ENCODE measurements at regions of chr3 and their contacts with region 1.

Region 1: DNA sequence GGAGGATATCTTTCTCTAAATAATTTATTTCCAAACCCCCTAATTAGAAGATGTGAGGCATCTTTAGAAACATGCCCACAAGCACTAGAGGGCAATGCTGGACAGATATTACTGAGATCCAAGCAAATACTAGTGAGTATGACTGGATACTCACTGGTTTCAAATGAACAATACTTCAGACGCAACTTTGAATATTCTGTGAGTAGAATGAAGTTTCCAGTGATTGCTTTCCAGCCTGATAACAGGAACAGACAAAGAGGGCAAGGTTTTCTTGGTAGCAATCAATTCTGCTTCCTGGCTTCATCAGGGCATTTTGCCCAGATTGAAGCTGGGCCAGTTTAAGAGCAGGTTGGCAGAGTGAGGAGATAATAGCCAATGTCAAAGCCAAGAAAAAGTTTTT is 442.6 kb upstream of the PDZRN3 start:
- DNase-seq: peak; percentile 23
- H3K4me3 Mint-ChIP-seq: no peak overlapping the region
- H3K27ac Mint-ChIP-seq: no peak overlapping the region
- H3K4me1 Mint-ChIP-seq: no peaks in the 10 kb centered on the region
- H3K27me3 Mint-ChIP-seq: peaks cover 23% of the 10 kb centered on the region
- CTCF ChIP-seq: peak; percentile 19

Region 2: GRCh38 chr3:73868688-73869315 is 198.5 kb before region 1 on chr3:
- CTCF ChIA-PET with region 1: no interaction called
- POLR2A ChIA-PET with region 1: no interaction called
- intact Hi-C with region 1: loop called (anchors 5 kb)
- DNase-seq: peak; percentile 54
- H3K4me3 Mint-ChIP-seq: no peak overlapping the region
- H3K27ac Mint-ChIP-seq: no peak overlapping the region
- H3K4me1 Mint-ChIP-seq: peaks cover 4% of the 10 kb centered on the region
- H3K27me3 Mint-ChIP-seq: peaks cover 11% of the 10 kb centered on the region
- CTCF ChIP-seq: peak; percentile 55

Region 3: GRCh38 chr3:73955494-73956070 is 111.7 kb before region 1 on chr3:
- CTCF ChIA-PET with region 1: no interaction called
- POLR2A ChIA-PET with region 1: no interaction called
- intact Hi-C with region 1: no loop called
- DNase-seq: no peak
- H3K4me3 Mint-ChIP-seq: no peak overlapping the region
- H3K27ac Mint-ChIP-seq: no peak overlapping the region
- H3K4me1 Mint-ChIP-seq: no peaks in the 10 kb centered on the region
- H3K27me3 Mint-ChIP-seq: peaks cover 10% of the 10 kb centered on the region
- CTCF ChIP-seq: no peak

Region 4: GRCh38 chr3:74080056-74080461 is 12.8 kb after region 1 on chr3:
- CTCF ChIA-PET with region 1: no interaction called
- POLR2A ChIA-PET with region 1: no interaction called
- intact Hi-C with region 1: no loop called
- DNase-seq: no peak
- H3K4me3 Mint-ChIP-seq: no peak overlapping the region
- H3K27ac Mint-ChIP-seq: no peak overlapping the region
- H3K4me1 Mint-ChIP-seq: no peaks in the 10 kb centered on the region
- H3K27me3 Mint-ChIP-seq: peaks cover 20% of the 10 kb centered on the region
- CTCF ChIP-seq: no peak

Region 5: DNA sequence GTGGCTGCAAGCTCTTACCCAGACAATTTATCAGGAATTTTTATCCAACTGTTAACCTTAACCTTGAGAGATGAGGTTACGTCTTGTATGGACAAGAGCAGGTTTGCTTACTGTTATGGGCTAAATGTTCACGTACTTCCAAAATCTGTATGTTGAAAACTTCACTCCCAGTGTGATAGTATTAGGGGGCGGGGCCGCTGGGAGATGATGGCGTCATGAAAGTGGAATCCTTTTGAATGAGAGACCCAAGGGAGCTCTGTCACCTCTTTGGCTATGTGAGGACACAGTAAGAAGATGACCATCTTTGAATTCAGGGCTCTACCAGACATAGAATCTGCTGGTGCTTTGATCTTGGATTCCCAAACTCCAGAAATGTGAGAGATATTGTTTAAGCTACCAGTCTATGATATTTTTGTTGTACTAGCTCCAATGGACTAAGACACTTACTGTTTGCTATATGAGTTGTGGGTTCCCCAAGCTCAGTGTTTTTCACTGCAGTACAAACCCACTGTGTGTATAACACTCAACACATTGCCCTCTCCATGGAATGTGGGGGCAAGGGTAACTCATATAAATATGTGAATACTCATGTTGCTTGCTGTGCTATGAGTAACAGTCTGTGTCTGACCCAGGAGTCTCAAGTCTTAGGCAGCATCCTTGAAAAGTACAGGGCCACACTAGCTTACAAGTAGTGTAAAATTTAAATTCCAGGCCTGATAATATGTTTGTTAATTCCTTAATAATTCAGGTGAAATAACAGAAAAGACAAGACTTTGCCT is 569.5 kb after region 1 on chr3:
- CTCF ChIA-PET with region 1: no interaction called
- POLR2A ChIA-PET with region 1: no interaction called
- intact Hi-C with region 1: no loop called
- DNase-seq: no peak
- H3K4me3 Mint-ChIP-seq: no peak overlapping the region
- H3K27ac Mint-ChIP-seq: no peak overlapping the region
- H3K4me1 Mint-ChIP-seq: no peaks in the 10 kb centered on the region
- H3K27me3 Mint-ChIP-seq: no peaks in the 10 kb centered on the region
- CTCF ChIP-seq: no peak

Region 6: GRCh38 chr3:75001330-75001729 is 934.0 kb after region 1 on chr3:
- CTCF ChIA-PET with region 1: no interaction called
- POLR2A ChIA-PET with region 1: no interaction called
- intact Hi-C with region 1: loop called (anchors 5 kb)
- DNase-seq: peak; percentile 25
- H3K4me3 Mint-ChIP-seq: no peak overlapping the region
- H3K27ac Mint-ChIP-seq: no peak overlapping the region
- H3K4me1 Mint-ChIP-seq: no peaks in the 10 kb centered on the region
- H3K27me3 Mint-ChIP-seq: no peaks in the 10 kb centered on the region
- CTCF ChIP-seq: peak; percentile 37

Region 7: GRCh38 chr3:75171630-75172230 is 1104.4 kb after region 1 on chr3:
- CTCF ChIA-PET with region 1: no interaction called
- POLR2A ChIA-PET with region 1: no interaction called
- intact Hi-C with region 1: loop called (anchors 5 kb)
- DNase-seq: peak; percentile 9
- H3K4me3 Mint-ChIP-seq: no peak overlapping the region
- H3K27ac Mint-ChIP-seq: no peak overlapping the region
- H3K4me1 Mint-ChIP-seq: no peaks in the 10 kb centered on the region
- H3K27me3 Mint-ChIP-seq: peaks cover 11% of the 10 kb centered on the region
- CTCF ChIP-seq: no peak

Measured in MCF 10A (cell line).